Heart right ventricle (tissue), 16 donors: ENCODE measurements at regions of chr7 and their contacts with region 1.

Region 1: GRCh38 chr7:1144269-1144771 is 15.7 kb downstream of the ZFAND2A start:
- DNase-seq: peak; percentile 44 to 50
- ATAC-seq: peak; percentile 82 to 97 (median 92)
- H3K4me3 ChIP-seq: no peak overlapping the region
- H3K27ac ChIP-seq: peak overlapping the region in 2 of 10 donors; percentile 26 to 42
- H3K4me1 ChIP-seq: peaks cover 0 to 11% (median 0%) of the 10 kb centered on the region in 9 donors
- H3K27me3 ChIP-seq: no peaks in the 10 kb centered on the region
- CTCF ChIP-seq: peak in 7 of 9 donors; percentile 32 to 64 (median 52)

Region 2: DNA sequence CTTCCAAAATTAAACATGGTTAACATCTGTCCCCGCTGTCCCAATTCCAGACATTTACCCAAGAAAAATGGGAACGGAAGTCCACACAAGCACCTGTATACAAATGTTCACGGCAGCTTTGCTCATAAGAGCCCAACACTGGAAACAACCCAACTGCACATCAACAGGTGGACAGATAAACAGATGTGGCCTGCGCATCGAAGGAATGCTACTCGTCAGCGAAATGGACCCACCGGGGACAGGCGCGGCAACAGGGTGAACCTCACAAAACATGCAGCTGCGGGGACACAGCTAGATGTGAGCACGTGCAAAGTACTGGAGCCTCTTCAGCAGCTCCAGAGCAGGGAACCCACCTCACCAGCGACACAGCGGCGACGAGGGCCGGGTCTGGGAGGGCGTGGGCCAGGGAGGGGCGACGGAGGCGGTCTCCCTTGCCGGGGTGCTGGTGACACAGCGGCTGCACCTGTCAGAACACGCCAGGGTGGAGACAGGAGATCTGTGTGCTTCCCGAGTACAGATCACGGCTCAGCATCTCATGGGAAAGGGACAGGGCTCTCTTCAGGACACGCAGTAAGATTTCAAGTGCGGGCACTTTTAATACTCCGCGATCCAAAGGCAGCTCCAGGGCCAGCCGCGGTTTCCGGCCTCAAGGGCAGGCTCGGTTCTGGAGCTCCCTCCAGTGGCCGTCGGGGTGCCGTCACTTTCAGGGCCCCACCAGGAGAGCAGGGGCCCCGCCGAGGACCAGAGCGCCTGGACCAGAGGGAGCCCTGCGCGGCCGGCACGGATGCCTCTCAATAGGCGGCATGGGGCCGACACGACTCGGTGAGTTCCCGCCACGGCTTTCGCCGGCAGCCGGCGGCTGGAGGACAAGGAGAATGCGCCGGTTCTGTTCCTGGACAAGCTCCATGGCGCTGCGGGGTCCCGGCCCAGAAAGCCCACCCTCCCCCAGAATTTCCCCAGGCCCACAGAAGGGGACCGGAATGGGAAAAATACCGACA is 78.8 kb before region 1 on chr7:
- intact Hi-C with region 1: loop called in 2 of 10 experiments (anchors 2 kb)
- DNase-seq: peak; percentile 85 to 87
- ATAC-seq: peak; percentile 89 to 95 (median 95)
- H3K4me3 ChIP-seq: peak overlapping the region in 9 of 10 donors; percentile 6 to 42 (median 25)
- H3K27ac ChIP-seq: no peak overlapping the region
- H3K4me1 ChIP-seq: peaks cover 7 to 27% (median 19%) of the 10 kb centered on the region in 9 donors
- H3K27me3 ChIP-seq: peaks cover 0 to 7% (median 0%) of the 10 kb centered on the region in 7 donors
- CTCF ChIP-seq: peak; percentile 95 to 99 (median 96)

Region 3: GRCh38 chr7:1159891-1160668 is 15.8 kb after region 1 on chr7 and contains the start of gene ZFAND2A:
- intact Hi-C with region 1: no loop called
- DNase-seq: peak; percentile 99
- ATAC-seq: peak; percentile 98 to 100 (median 99)
- H3K4me3 ChIP-seq: peak within 1 kb of the TSS; percentile 58 to 100 (median 91)
- H3K27ac ChIP-seq: peak within 1 kb of the TSS; percentile 85 to 100 (median 98)
- H3K4me1 ChIP-seq: peaks cover 7 to 28% (median 22%) of the 10 kb centered on the region in 9 donors
- H3K27me3 ChIP-seq: no peaks in the 10 kb centered on the region
- CTCF ChIP-seq: peak in 1 of 9 donors; percentile 3
- total RNA-seq, gene ZFAND2A: 4.4 to 11.2 (median 7.7) TPM